K562 (cell line): ENCODE measurements at regions of chr15 and their contacts with region 1.

Region 1: GRCh38 chr15:84955089-84955848 is 26.4 kb upstream of the PDE8A start:
- DNase-seq: peak; percentile 65 to 87 (median 72)
- ATAC-seq: peak; percentile 82
- H3K4me3 ChIP-seq: no peak overlapping the region
- H3K27ac ChIP-seq: peak overlapping the region; percentile 25; the same call in 1 of the 3 replicates
- H3K4me1 ChIP-seq: peaks cover 44 to 56% of the 10 kb centered on the region in 2 experiments
- H3K27me3 ChIP-seq: no peaks in the 10 kb centered on the region
- CTCF ChIP-seq: peak; percentile 85 to 92 (median 90)
- EP300 ChIP-seq: peak; percentile 39; the same call in 1 of the 2 replicates
- POLR2A ChIP-seq: no peak
- RAD21 ChIP-seq: peak; percentile 84 to 94

Region 2: DNA sequence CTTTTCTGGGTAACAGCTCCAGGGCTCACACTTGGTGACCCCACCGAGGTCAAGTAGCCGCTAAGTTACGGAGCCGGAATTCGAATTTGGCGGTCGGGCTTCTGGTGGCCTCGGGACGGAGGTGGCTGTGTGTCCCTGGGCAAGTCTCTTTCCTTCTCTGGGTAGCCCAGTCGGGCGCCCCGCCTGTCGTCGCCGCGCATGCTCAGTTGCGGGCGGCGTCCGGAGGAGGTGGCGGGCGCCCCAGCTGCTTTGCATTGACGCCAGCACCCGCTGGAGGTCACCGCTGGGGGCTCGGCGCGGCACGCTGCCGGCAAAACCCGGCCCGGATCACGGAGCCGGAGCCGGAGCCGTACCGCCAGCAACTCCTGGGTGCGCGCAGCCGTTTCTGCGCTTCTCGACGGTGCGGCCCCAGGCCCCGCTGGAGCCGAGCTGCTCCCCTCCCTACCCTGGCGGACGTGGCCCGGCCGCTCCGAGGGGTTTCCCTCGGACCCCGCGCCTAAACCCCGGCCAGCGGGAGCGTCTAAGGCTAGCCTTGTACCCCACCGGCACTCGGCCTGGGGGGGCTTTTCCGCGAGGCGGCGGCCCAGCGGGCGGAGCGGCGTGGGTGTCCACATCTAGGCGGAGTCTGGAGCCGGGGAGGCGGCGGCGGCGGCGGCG is 25.9 kb after region 1 on chr15:
- CTCF ChIA-PET with region 1: no interaction called
- POLR2A ChIA-PET with region 1: interaction called, 9 read pairs
- in situ Hi-C with region 1: no loop called
- intact Hi-C with region 1: loop called (anchors 2 kb)
- DNase-seq: peak; percentile 96 to 99 (median 97)
- ATAC-seq: peak; percentile 82
- H3K4me3 ChIP-seq: peak overlapping the region; percentile 71
- H3K27ac ChIP-seq: peak overlapping the region; percentile 93
- H3K4me1 ChIP-seq: peaks cover 28 to 31% of the 10 kb centered on the region in 2 experiments
- H3K27me3 ChIP-seq: no peaks in the 10 kb centered on the region
- CTCF ChIP-seq: peak; percentile 43 to 66 (median 49); a peak in 4 of 6 replicates
- EP300 ChIP-seq: peak; percentile 42; the same call in 1 of the 2 replicates
- POLR2A ChIP-seq: peak; percentile 64
- RAD21 ChIP-seq: peak; percentile 4 to 20; a peak in 2 of 4 replicates

Region 3: DNA sequence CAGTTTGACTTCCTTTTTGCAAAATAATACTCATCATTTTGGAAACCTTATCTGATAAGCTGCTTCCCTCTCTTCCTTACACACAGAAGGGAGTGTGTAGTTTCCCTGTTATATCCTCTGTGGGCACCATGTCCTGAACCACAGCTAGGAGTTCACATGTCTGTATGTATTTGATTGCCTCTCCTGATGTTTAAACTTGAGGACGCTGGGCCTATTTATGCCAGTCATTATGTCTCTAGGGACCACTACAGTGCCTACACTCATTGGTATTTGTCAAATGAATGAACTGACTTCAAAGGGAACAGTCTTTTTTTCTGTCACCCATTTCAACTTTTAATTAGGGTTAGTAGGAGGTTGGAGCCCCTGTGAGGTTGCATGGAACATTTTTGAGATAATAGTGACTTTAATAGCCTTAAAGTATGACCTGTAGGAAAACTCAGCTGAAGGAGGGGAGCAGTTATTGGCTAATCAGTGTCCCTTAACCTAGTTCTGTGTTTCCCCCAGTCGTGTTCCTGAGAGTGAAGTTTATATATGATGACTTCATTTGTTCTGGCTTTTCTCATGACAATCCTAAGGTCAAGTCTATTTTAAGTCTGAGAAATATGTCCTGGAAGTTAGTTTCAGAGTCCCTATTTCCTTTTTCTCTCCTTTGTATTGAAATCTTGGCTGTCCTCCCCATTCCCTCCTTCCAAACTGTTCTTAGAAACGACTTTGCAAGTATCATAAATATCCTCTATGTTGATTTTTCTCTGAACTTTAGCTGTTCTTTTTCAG is 55.3 kb after region 1 on chr15:
- CTCF ChIA-PET with region 1: no interaction called
- POLR2A ChIA-PET with region 1: interaction called, 4 read pairs
- in situ Hi-C with region 1: no loop called
- intact Hi-C with region 1: loop called (anchors 1 kb)
- DNase-seq: peak in 3 of 4 experiments; percentile 30 to 68 (median 57)
- ATAC-seq: peak; percentile 79
- H3K4me3 ChIP-seq: no peak overlapping the region
- H3K27ac ChIP-seq: peak overlapping the region; percentile 53
- H3K4me1 ChIP-seq: peaks cover 11 to 41% of the 10 kb centered on the region in 2 experiments
- H3K27me3 ChIP-seq: no peaks in the 10 kb centered on the region
- CTCF ChIP-seq: peak; percentile 38 to 59 (median 54); a peak in 5 of 6 replicates
- EP300 ChIP-seq: no peak
- POLR2A ChIP-seq: no peak
- RAD21 ChIP-seq: peak; percentile 44 to 72